ENCODE measurements at regions of chr6 and their contacts with region 1.

Region 1: DNA sequence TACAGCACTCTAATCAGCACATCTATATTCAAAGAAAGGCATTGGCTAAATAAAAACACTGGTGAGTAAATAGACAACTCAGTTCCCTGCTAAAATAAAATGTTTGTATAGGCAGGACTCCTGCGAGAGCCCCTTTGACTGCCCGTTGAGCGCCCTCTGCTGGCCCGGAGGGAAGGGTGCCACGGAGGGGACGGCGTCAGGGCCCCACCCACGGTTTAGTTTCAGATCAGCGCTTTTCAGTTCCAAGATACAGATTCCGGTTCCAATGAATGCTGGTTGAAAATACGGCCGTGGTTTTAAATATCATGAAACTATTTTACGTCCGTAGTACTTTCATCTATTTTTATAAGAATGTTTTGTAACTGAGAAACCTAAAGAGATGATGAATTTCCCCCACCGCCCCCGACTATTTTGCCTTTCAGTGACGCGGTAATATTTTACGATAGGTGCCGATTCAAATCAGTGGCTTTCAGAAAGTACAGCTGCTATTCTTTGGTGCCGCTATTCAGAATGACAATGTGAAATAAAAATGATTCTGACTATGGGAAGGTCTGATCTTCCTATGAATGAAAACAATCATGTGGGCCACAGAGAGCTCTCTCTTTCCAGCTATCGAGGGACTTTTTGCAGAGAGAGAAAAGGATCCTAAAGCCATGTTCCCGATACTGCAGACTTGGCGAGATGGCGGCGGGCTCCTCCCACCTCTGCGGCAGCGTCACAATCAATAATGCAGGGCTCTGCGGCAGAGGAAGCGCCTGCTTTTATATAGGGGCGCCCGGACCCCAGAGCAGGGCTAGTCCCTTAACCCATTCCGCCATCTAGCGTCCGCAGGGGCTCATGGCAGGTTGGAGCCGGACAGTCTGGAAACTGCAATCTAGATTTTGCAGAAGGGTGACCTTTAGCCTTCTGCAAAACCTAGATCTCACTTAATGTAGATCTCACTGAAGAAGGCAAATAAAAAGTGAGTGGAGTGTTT is 10.6 kb upstream of the CCN6 start:
- DNase-seq: peak; percentile 83
- H3K4me3 Mint-ChIP-seq: peak overlapping the region; percentile 92
- H3K27ac Mint-ChIP-seq: peak overlapping the region; percentile 92
- H3K4me1 Mint-ChIP-seq: peaks cover 42% of the 10 kb centered on the region
- H3K27me3 Mint-ChIP-seq: no peaks in the 10 kb centered on the region

Region 2: DNA sequence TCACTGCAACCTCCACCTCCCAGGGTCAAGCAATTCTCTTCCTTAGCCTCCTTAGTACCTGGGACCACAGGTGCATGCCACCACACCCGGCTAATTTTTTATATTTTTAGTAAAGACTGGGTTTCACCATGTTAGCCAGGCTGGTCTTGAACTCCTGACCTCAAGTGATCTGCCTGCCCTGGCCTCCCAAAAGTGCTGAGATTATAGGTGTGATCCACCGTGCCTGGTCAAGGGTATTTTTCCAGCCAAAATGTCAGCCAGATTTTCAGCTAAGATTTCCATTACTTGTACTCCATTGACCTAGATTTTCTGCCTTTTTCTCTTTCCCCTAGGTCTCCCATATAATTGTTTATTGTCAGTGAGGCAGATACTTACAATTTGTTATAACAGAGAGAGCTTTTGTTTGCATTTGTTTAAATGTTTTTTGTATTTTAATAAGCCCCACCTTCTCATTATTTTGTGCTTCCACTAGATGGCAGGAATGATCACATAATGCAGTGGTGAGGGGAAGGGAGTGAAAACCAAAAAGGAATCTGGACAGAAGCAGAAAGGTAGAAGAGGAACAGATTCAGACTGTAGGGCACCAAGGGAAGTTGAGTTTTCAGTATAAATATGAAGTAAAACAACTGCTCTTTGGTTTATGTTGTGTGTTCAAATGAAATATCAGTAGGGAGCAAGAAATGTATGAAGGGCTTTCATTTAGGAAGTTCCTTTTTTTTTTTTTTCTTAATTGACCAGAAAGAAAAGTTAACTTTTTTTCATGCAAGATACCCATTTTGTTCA is 1031.8 kb before region 1 on chr6:
- intact Hi-C with region 1: loop called (anchors 5 kb)
- DNase-seq: no peak
- H3K4me3 Mint-ChIP-seq: no peak overlapping the region
- H3K27ac Mint-ChIP-seq: no peak overlapping the region
- H3K4me1 Mint-ChIP-seq: peaks cover 6% of the 10 kb centered on the region
- H3K27me3 Mint-ChIP-seq: no peaks in the 10 kb centered on the region

Region 3: GRCh38 chr6:111427341-111428116 is 615.8 kb before region 1 on chr6:
- intact Hi-C with region 1: loop called (anchors 10 kb)
- DNase-seq: no peak
- H3K4me3 Mint-ChIP-seq: peak overlapping the region; percentile 34
- H3K27ac Mint-ChIP-seq: no peak overlapping the region
- H3K4me1 Mint-ChIP-seq: peaks cover 37% of the 10 kb centered on the region
- H3K27me3 Mint-ChIP-seq: no peaks in the 10 kb centered on the region

Region 4: GRCh38 chr6:111709615-111710398 is 333.5 kb before region 1 on chr6:
- intact Hi-C with region 1: loop called (anchors 1 kb)
- DNase-seq: peak; percentile 41
- H3K4me3 Mint-ChIP-seq: peak overlapping the region; percentile 45
- H3K27ac Mint-ChIP-seq: peak overlapping the region; percentile 44
- H3K4me1 Mint-ChIP-seq: peaks cover 66% of the 10 kb centered on the region
- H3K27me3 Mint-ChIP-seq: no peaks in the 10 kb centered on the region

Region 5: GRCh38 chr6:111846492-111847409 is 196.6 kb before region 1 on chr6:
- intact Hi-C with region 1: loop called (anchors 1 kb)
- DNase-seq: peak; percentile 35
- H3K4me3 Mint-ChIP-seq: peak overlapping the region; percentile 65
- H3K27ac Mint-ChIP-seq: no peak overlapping the region
- H3K4me1 Mint-ChIP-seq: peaks cover 30% of the 10 kb centered on the region
- H3K27me3 Mint-ChIP-seq: no peaks in the 10 kb centered on the region

Region 6: DNA sequence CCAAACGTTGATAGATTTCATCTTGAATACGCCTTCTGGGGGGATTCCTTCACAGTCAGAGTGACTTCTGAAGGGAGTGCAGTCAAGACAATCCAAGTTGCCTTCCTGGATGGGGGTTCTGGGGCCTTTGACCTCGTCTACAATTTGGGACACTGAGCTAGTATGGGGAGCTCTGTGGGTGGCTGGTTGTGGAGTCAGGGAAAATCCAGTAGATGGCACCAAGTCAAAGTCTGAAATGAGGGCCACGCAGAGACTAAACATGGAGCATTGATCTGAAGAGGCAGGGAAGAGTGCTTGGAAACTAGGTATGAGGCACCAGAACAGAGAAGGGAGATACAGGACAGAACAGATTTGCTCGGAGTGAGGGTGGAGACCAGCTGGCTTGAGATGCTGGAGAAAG is 33.0 kb before region 1 on chr6:
- intact Hi-C with region 1: loop called (anchors 1 kb)
- DNase-seq: no peak
- H3K4me3 Mint-ChIP-seq: no peak overlapping the region
- H3K27ac Mint-ChIP-seq: no peak overlapping the region
- H3K4me1 Mint-ChIP-seq: peaks cover 29% of the 10 kb centered on the region
- H3K27me3 Mint-ChIP-seq: no peaks in the 10 kb centered on the region

Region 7: GRCh38 chr6:112163295-112164257 is 120.3 kb after region 1 on chr6:
- intact Hi-C with region 1: loop called (anchors 1 kb)
- DNase-seq: peak; percentile 54
- H3K4me3 Mint-ChIP-seq: peak overlapping the region; percentile 53
- H3K27ac Mint-ChIP-seq: no peak overlapping the region
- H3K4me1 Mint-ChIP-seq: peaks cover 12% of the 10 kb centered on the region
- H3K27me3 Mint-ChIP-seq: peaks cover 51% of the 10 kb centered on the region

Measured in activated T-helper 1 cell treated with anti-CD3 and anti-CD28 coated beads, Interleukin-12 subunit alpha, Interleukin-12 subunit beta, Interleukin-2, Interleukin-4 antibody, amounts not matched to agents 30 ng/mL and 10 ng/mL and 1 ng/mL, durations not matched to agents 14 hours and 24 hours and 36 hours (primary cell).